Panc1 (cell line): ENCODE measurements at regions of chr2 and their contacts with region 1.

Region 1: DNA sequence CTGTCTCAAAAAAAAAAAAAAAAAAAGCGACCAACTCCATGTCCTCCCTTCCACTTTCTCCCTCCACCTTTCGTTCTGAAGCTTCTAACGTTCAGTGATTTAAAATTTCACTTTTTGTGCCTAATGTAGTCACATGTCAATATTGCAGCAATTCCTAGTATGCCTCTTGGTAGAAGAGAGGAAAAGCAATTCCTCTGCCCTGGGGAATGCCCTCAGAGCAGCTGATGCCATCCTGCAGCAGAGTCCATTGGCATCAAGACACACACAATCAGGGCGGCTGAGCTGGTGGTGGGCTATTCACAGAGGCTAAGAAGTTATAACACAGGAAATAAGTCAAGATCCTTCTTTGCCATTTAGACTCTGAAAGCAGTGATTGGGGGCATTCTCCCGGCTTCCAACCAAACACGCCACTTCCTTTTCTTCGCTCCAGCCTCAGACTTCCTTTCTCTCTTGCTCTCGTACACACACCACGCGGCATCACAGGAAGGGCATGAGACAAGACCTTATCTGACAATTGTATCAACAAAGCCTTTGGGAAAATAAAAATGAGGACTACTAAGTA is 71.9 kb downstream of the MOGAT1 start:
- DNase-seq: no peak
- ATAC-seq: no peak
- H3K4me3 ChIP-seq: no peak overlapping the region
- H3K27ac ChIP-seq: no peak overlapping the region
- H3K4me1 ChIP-seq: no peaks in the 10 kb centered on the region
- H3K27me3 ChIP-seq: no peaks in the 10 kb centered on the region
- CTCF ChIP-seq: no peak

Region 2: GRCh38 chr2:222732489-222733178 is 10.7 kb before region 1 on chr2:
- CTCF ChIA-PET with region 1: interaction called, 3 read pairs
- POLR2A ChIA-PET with region 1: interaction called, 11 read pairs
- in situ Hi-C with region 1: no loop called
- intact Hi-C with region 1: no loop called
- DNase-seq: no peak
- ATAC-seq: no peak
- H3K4me3 ChIP-seq: no peak overlapping the region
- H3K27ac ChIP-seq: no peak overlapping the region
- H3K4me1 ChIP-seq: no peaks in the 10 kb centered on the region
- H3K27me3 ChIP-seq: no peaks in the 10 kb centered on the region; the same call in 1 of the 2 replicates
- CTCF ChIP-seq: no peak

Region 3: GRCh38 chr2:222760301-222760897 is 17.1 kb after region 1 on chr2:
- CTCF ChIA-PET with region 1: interaction called, 14 read pairs
- POLR2A ChIA-PET with region 1: interaction called, 4 read pairs
- in situ Hi-C with region 1: no loop called
- intact Hi-C with region 1: no loop called
- DNase-seq: no peak
- ATAC-seq: no peak
- H3K4me3 ChIP-seq: no peak overlapping the region
- H3K27ac ChIP-seq: no peak overlapping the region
- H3K4me1 ChIP-seq: no peaks in the 10 kb centered on the region
- H3K27me3 ChIP-seq: no peaks in the 10 kb centered on the region
- CTCF ChIP-seq: no peak